CD4-positive, alpha-beta T cell (primary cell): ENCODE measurements at regions of chr6 and their contacts with region 1.

Region 1: GRCh38 chr6:57021086-57021720 is 25.3 kb upstream of the KIAA1586 start:
- DNase-seq: peak in 3 of 14 experiments; percentile 22 to 38 (median 26)
- ATAC-seq: peak; percentile 44
- H3K4me3 ChIP-seq: no peak overlapping the region
- H3K4me3 Mint-ChIP-seq: no peak overlapping the region
- H3K27ac ChIP-seq: no peak overlapping the region
- H3K27ac Mint-ChIP-seq: no peak overlapping the region
- H3K4me1 ChIP-seq: no peaks in the 10 kb centered on the region
- H3K4me1 Mint-ChIP-seq: no peaks in the 10 kb centered on the region
- H3K27me3 ChIP-seq: no peaks in the 10 kb centered on the region
- H3K27me3 Mint-ChIP-seq: peaks cover 5% of the 10 kb centered on the region
- CTCF ChIP-seq: peak; percentile 62

Region 2: GRCh38 chr6:56902641-56903464 is 118.3 kb before region 1 on chr6:
- CTCF ChIA-PET with region 1: no interaction called
- POLR2A ChIA-PET with region 1: no interaction called
- intact Hi-C with region 1: loop called (anchors 2 to 5 kb)
- DNase-seq: peak in 3 of 14 experiments; percentile 36 to 61 (median 54)
- ATAC-seq: no peak
- H3K4me3 ChIP-seq: no peak overlapping the region
- H3K4me3 Mint-ChIP-seq: no peak overlapping the region
- H3K27ac ChIP-seq: no peak overlapping the region
- H3K27ac Mint-ChIP-seq: no peak overlapping the region
- H3K4me1 ChIP-seq: peaks cover 4% of the 10 kb centered on the region
- H3K4me1 Mint-ChIP-seq: no peaks in the 10 kb centered on the region
- H3K27me3 ChIP-seq: no peaks in the 10 kb centered on the region
- H3K27me3 Mint-ChIP-seq: peaks cover 11% of the 10 kb centered on the region
- CTCF ChIP-seq: peak; percentile 75